B cell (primary cell): ENCODE measurements at regions of chr5 and their contacts with region 1.

Region 1: DNA sequence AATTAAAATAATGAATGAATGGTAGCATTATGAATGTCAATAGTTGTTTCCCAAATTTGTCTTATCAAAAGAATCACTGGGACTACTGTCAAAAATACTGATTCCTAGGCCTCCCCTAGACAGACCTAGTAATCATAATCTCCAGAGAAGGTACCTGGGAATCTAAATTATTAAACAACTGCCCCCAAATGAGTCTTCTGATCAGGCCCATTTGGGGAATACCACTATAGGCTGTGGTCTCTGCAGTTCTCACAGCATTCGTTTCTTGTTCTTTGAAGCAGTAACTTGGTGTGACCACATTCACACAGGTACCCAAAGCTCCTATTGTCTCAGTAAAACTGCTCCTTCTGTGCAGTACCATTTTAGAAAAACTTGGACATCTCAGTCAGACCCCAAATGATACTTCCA is 230.9 kb downstream of the PIK3R1 start:
- DNase-seq: no peak
- ATAC-seq: no peak
- H3K4me3 ChIP-seq: no peak overlapping the region
- H3K4me3 Mint-ChIP-seq: no peak overlapping the region
- H3K27ac ChIP-seq: no peak overlapping the region
- H3K27ac Mint-ChIP-seq: no peak overlapping the region
- H3K4me1 ChIP-seq: no peaks in the 10 kb centered on the region
- H3K4me1 Mint-ChIP-seq: no peaks in the 10 kb centered on the region
- H3K27me3 ChIP-seq: no peaks in the 10 kb centered on the region
- H3K27me3 Mint-ChIP-seq: peaks cover 4% of the 10 kb centered on the region
- CTCF ChIP-seq: no peak

Region 2: DNA sequence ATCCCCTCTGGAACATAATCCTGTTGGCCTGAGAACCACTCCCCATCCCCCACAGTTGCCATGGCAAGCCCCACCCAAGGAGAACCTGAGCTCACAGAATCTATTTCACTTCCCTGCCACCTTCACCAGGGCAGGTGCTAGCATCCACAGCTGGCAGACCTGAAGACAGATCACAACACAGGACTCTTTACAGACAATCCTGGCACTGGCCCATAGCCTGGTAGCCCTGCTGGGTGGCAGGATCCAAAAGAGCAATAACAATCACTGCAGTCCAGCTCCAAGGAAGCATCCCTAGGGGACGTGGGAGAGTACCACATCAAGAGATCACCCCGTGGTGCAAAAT is 694.2 kb before region 1 on chr5:
- CTCF ChIA-PET with region 1: no interaction called
- POLR2A ChIA-PET with region 1: no interaction called
- intact Hi-C with region 1: no loop called
- DNase-seq: no peak
- ATAC-seq: no peak
- H3K4me3 ChIP-seq: no peak overlapping the region
- H3K4me3 Mint-ChIP-seq: no peak overlapping the region
- H3K27ac ChIP-seq: no peak overlapping the region
- H3K27ac Mint-ChIP-seq: no peak overlapping the region
- H3K4me1 ChIP-seq: no peaks in the 10 kb centered on the region
- H3K4me1 Mint-ChIP-seq: no peaks in the 10 kb centered on the region
- H3K27me3 ChIP-seq: no peaks in the 10 kb centered on the region
- H3K27me3 Mint-ChIP-seq: no peaks in the 10 kb centered on the region
- CTCF ChIP-seq: no peak

Region 3: DNA sequence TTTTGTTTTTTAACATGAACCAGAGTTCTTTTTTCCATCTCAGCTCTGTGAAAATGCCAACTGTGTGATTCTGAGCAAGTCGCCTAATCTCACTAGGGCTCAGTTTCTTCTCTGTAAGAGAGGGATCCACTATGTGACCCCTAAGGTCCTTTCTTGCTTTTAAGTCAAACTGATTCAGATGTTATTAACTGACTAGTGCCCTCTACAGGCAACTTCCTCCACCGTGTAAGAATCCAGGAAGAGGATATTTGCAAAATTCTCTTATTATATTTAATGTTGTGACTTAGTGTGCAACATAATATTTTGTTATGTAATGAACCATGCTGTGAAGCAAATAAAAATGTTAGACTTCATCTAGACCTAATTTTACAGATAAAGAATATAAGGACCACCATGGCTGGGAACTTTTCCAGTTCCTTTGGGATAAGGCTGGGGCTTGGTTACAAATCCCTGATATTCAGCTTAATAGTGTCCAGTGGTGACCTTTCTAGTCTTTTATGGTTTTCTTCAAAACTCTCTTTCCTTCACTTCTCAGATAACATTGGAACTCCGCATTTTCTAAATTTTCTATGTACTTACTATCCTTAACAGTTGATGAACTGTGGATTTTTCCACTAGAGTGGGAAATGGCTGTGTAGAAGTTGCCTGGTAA is 13.8 kb after region 1 on chr5:
- CTCF ChIA-PET with region 1: interaction called, 29 read pairs
- POLR2A ChIA-PET with region 1: no interaction called
- intact Hi-C with region 1: no loop called
- DNase-seq: peak; percentile 74
- ATAC-seq: peak; percentile 31
- H3K4me3 ChIP-seq: no peak overlapping the region
- H3K4me3 Mint-ChIP-seq: no peak overlapping the region
- H3K27ac ChIP-seq: no peak overlapping the region
- H3K27ac Mint-ChIP-seq: no peak overlapping the region
- H3K4me1 ChIP-seq: no peaks in the 10 kb centered on the region
- H3K4me1 Mint-ChIP-seq: no peaks in the 10 kb centered on the region
- H3K27me3 ChIP-seq: no peaks in the 10 kb centered on the region
- H3K27me3 Mint-ChIP-seq: no peaks in the 10 kb centered on the region
- CTCF ChIP-seq: peak; percentile 84